BJ (cell line): ENCODE measurements at regions of chr4 and their contacts with region 1.

Region 1: DNA sequence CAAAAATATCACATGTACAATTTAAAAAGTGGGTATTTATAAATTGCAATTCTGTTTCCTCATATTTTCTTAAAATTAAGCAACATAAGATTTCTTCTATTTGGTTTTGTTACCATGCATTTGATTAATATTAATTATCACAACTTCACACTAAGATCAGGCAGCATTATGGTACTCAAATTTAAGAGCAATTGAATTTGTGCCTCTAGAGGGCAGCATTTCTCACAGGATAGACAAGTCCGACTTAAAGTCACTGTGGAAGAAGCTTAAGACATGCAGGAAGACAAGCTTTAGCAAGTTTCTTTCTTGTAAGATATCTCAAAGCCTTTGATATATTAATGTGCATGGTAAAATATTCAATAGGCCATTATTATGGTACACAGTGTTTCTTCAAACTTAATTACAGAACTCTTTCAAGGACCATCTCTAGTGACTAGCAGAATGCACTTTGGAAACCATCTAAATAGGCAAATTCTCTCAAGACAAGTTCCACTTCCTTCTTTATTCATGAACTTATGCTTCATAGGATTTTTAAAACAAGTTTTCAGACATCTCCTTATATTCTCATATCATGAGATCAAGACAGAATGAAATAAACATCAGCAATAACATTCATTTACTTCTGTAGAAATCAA is 35.0 kb downstream of the FBXW7 start:
- DNase-seq: peak; percentile 35
- H3K4me3 ChIP-seq: no peak overlapping the region
- H3K27me3 ChIP-seq: no peaks in the 10 kb centered on the region
- CTCF ChIP-seq: peak; percentile 75

Region 2: GRCh38 chr4:151729731-151730559 is 771.0 kb before region 1 on chr4:
- CTCF ChIA-PET with region 1: no interaction called
- POLR2A ChIA-PET with region 1: no interaction called
- DNase-seq: no peak
- H3K4me3 ChIP-seq: no peak overlapping the region
- H3K27me3 ChIP-seq: no peaks in the 10 kb centered on the region
- CTCF ChIP-seq: no peak

Region 3: DNA sequence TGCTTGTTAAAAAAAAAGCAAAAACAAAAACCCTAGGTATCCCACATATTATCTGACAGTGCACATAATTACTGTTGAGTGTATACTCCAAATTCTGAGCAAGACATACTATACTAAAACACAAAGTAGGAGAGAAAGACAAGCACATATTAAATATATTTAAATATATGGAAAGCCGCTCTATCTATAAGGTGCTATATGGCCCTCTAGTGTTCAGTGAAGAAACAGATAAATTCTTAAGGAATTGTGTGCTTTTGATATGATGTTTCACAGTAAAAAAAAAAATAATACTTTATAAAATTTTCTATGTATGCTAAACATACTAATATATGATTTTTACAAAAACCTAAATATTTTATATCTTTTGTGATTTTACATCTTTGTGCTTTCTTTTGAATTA is 102.9 kb before region 1 on chr4:
- CTCF ChIA-PET with region 1: no interaction called
- POLR2A ChIA-PET with region 1: no interaction called
- DNase-seq: no peak
- H3K4me3 ChIP-seq: no peak overlapping the region
- H3K27me3 ChIP-seq: no peaks in the 10 kb centered on the region
- CTCF ChIP-seq: no peak

Region 4: DNA sequence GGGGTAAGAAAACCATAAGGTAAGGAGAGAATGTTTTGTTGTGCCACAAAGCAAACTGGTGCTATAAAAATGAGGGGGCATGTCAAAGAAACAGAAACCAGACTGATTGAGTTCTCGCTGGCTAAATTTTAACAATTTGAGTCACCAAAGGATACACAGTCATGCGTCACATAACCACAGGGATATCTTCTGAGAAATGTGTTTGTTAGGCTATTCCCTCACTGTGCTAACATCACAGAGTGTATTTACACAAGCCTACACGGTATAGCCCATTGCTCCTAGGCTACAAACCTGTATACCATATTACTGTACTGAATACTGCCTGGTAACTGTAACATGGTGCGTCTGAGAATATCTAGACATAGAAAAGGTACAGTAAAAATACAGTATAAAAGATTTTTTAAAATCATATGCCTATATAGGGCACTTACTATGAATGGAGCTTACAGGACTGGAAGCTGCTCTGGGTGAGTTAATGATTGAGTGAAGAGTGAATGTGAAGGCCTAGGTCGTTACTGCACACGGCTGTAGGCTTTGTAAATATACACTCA is 15.1 kb before region 1 on chr4:
- CTCF ChIA-PET with region 1: interaction called, 23 read pairs
- POLR2A ChIA-PET with region 1: no interaction called
- DNase-seq: peak; percentile 13
- H3K4me3 ChIP-seq: no peak overlapping the region
- H3K27me3 ChIP-seq: no peaks in the 10 kb centered on the region
- CTCF ChIP-seq: no peak

Region 5: GRCh38 chr4:152515678-152516077 is 14.8 kb after region 1 on chr4:
- CTCF ChIA-PET with region 1: interaction called, 22 read pairs
- POLR2A ChIA-PET with region 1: no interaction called
- DNase-seq: peak; percentile 39
- H3K4me3 ChIP-seq: no peak overlapping the region
- H3K27me3 ChIP-seq: no peaks in the 10 kb centered on the region
- CTCF ChIP-seq: no peak

Region 6: GRCh38 chr4:152535903-152536544 is 35.1 kb after region 1 on chr4 and contains the start of gene FBXW7:
- CTCF ChIA-PET with region 1: interaction called, 10 read pairs
- POLR2A ChIA-PET with region 1: no interaction called
- DNase-seq: peak; percentile 92
- H3K4me3 ChIP-seq: peak within 1 kb of the TSS; percentile 89
- H3K27me3 ChIP-seq: no peaks in the 10 kb centered on the region
- CTCF ChIP-seq: no peak
- polyA plus RNA-seq, gene FBXW7: 4.1 and 11.0 TPM in 2 replicates

Region 7: DNA sequence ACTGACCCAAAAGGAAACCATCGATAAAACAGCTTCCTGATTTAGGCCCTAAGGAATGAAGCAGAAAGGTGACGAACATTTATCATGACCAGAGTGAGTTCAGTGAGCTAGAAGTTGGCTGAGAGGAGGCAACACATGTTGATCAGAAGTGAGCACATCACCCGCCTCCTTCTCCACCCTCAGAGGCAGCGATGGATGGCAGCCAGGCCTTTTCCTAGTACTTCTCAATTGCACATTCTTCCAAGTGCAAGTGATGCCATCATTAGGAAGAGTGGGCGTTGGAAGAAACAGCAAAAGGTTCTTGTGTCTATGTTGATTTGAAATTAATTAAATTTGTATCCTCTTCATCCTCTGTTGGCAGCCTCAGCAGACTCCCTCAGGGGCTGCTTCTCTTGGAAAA is 127.2 kb after region 1 on chr4:
- CTCF ChIA-PET with region 1: interaction called, 16 read pairs
- POLR2A ChIA-PET with region 1: no interaction called
- DNase-seq: no peak
- H3K4me3 ChIP-seq: no peak overlapping the region
- H3K27me3 ChIP-seq: no peaks in the 10 kb centered on the region
- CTCF ChIP-seq: no peak